GM10248 (cell line): ENCODE measurements at regions of chr6 and their contacts with region 1.

Region 1: DNA sequence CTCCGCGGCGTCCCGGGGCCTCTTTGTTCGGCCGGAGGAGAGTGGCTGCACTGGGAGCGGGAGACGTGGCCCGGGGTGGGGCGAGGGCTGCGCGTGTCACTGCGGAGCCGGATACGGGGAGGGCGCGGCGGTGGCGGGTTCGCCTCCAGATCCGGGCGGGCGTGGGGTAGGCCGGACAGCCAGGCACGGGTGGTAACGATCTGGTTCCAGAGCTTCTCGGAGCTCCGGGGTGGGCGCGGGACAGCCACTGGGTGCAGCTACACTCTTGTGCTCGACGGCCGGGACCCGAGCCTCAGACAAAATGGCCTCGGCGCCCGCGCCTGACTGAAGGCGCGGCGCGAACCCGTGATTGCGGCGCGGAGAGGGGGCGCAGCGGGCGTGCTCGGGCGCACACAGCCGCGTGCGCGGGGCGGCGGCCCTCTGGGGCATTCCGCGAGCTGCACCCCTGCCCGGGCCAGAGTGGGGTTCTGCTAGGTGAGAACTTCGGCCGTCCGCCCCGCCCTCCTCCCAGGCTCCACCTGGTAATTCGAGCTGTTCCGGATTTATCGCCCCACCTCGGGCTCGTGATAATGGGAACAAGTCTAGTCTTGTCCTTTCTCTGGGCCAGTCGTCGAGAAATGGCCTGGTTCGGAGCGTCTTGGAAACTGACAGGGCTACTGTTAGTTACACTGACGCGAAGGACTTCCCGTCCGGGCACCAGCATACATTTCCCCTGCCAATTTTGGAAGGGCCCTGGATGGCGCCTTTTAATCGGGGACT is 1.0 kb downstream of the LOC128125822 start:
- DNase-seq: peak; percentile 62
- CTCF ChIP-seq: no peak

Region 2: GRCh38 chr6:63352587-63353285 is 220.6 kb before region 1 on chr6:
- CTCF ChIA-PET with region 1: interaction called, 18 read pairs
- POLR2A ChIA-PET with region 1: no interaction called
- DNase-seq: peak; percentile 62
- CTCF ChIP-seq: peak; percentile 76

Region 3: DNA sequence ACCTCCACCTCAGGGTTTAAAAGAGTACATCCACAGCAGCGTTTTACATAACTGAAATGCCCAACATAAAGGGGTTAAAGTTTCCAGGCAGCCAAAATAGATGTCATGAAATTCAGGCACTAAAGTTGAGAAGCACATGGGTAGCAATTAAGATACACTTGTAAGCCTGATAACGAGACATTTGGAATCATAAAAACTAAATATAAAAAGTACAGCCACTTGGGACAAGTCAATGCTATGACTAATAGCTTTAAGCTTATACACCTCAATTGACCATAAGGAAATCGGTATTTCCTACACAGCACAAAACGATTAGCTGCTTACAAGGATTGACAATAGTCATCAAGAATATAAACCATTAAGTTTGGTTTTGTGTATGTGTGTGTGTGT is 10.8 kb after region 1 on chr6:
- CTCF ChIA-PET with region 1: interaction called, 21 read pairs
- POLR2A ChIA-PET with region 1: interaction called, 10 read pairs
- DNase-seq: no peak
- CTCF ChIP-seq: no peak

Region 4: DNA sequence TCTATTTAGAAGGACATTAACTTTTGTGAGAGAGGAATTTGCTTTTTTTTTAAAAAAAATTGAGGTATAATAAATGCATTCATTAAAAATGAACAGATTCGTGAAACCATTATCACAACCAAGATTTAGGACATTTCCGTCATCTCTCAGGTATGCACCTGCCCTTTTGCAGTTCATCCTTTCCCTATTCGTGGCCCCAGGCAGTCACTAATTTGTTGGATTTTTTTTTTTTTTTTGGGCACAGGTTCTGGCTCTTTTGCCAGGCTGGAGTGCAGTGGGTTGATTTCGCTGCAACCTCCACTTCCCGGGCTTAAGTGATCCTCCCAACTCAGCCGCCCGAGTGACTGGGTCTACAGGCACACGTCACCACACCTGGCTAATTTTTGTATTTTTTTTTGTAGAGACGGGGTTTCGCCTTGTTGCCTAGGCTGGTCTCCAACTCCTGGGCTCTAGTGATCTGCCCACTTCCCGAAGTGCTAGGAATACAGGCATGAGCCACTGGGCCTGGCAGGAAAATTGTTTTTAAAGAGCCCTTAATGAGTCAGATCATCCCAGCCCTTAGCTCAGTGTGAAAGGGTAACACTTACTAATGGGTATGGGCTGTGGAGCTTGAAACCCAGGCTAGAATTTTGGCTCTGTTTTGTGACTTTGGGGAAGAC is 71.5 kb after region 1 on chr6:
- CTCF ChIA-PET with region 1: no interaction called
- POLR2A ChIA-PET with region 1: no interaction called
- DNase-seq: no peak
- CTCF ChIP-seq: no peak

Region 5: GRCh38 chr6:63943826-63944225 is 370.5 kb after region 1 on chr6:
- CTCF ChIA-PET with region 1: no interaction called
- POLR2A ChIA-PET with region 1: no interaction called
- DNase-seq: no peak
- CTCF ChIP-seq: no peak